ENCODE measurements at regions of chr11 and their contacts with region 1.

Region 1: GRCh38 chr11:77127232-77127911 is 674 bp upstream of the MYO7A start:
- DNase-seq: peak; percentile 49 to 57
- H3K4me3 ChIP-seq: peak overlapping the region in 1 of 3 donors; percentile 29
- H3K27ac ChIP-seq: no peak overlapping the region
- H3K4me1 ChIP-seq: peaks cover 11 to 16% of the 10 kb centered on the region in 2 donors
- H3K27me3 ChIP-seq: no peaks in the 10 kb centered on the region
- CTCF ChIP-seq: peak; percentile 95 to 98 (median 96)
- POLR2A ChIP-seq: no peak

Region 2: GRCh38 chr11:76903329-76903728 is 224.0 kb before region 1 on chr11:
- intact Hi-C with region 1: no loop called
- DNase-seq: peak; percentile 17 to 24
- H3K4me3 ChIP-seq: no peak overlapping the region
- H3K27ac ChIP-seq: no peak overlapping the region
- H3K4me1 ChIP-seq: no peaks in the 10 kb centered on the region
- H3K27me3 ChIP-seq: no peaks in the 10 kb centered on the region
- CTCF ChIP-seq: no peak
- POLR2A ChIP-seq: no peak

Region 3: DNA sequence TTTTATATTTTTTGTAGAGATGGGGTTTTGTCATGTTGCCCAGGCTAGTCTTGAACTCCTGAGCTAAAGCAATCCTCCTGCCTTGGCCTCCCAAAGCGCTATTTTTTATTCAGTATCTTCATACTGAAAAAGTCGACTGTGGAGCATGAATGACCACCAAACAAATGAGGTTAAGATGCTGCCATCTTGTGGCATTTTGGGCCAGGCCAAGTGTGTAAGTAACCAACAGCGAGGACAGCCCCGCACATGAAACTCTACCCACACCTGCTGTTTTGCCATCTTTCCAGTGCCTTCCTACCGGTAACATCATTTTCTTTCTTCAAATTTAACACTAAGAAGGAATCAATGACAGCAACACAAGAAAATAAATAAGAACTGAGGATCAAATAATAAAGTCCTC is 430.2 kb after region 1 on chr11:
- intact Hi-C with region 1: loop called (anchors 10 kb)
- DNase-seq: peak in 1 of 2 donors; percentile 3
- H3K4me3 ChIP-seq: no peak overlapping the region
- H3K27ac ChIP-seq: no peak overlapping the region
- H3K4me1 ChIP-seq: no peaks in the 10 kb centered on the region
- H3K27me3 ChIP-seq: no peaks in the 10 kb centered on the region
- CTCF ChIP-seq: peak in 1 of 6 experiments; percentile 4
- POLR2A ChIP-seq: no peak

Measured in thyroid gland (tissue), 4 donors.